Dorsolateral prefrontal cortex (tissue), 120 donors: ENCODE measurements at regions of chr5 and their contacts with region 1.

Region 1: GRCh38 chr5:159456722-159457465 is 126.6 kb upstream of the IL12B start:
- DNase-seq: no peak
- H3K4me3 ChIP-seq: no peak overlapping the region
- H3K27ac ChIP-seq: peak overlapping the region in 5 of 59 donors; percentile 30 to 53 (median 39)
- H3K27me3 ChIP-seq: no peaks in the 10 kb centered on the region
- CTCF ChIP-seq: no peak

Region 2: GRCh38 chr5:159548517-159548916 is 91.6 kb after region 1 on chr5:
- intact Hi-C with region 1: loop called in 1 of 2 experiments (anchors 10 kb)
- DNase-seq: peak in 3 of 10 donors; percentile 25 to 53 (median 30)
- H3K4me3 ChIP-seq: no peak overlapping the region
- H3K27ac ChIP-seq: peak overlapping the region in 10 of 59 donors; percentile 6 to 69 (median 34)
- H3K27me3 ChIP-seq: no peaks in the 10 kb centered on the region
- CTCF ChIP-seq: no peak